ENCODE measurements at regions of chr5 and their contacts with region 1.

Region 1: GRCh38 chr5:140639148-140639979 is at the start of gene TMCO6:
- DNase-seq: peak; percentile 100
- H3K4me3 ChIP-seq: peak within 1 kb of the TSS; percentile 49 to 83 (median 72)
- H3K27ac ChIP-seq: peak within 1 kb of the TSS; percentile 78 to 98 (median 94)
- H3K4me1 ChIP-seq: peaks cover 9 to 63% (median 37%) of the 10 kb centered on the region in 6 donors
- H3K27me3 ChIP-seq: no peaks in the 10 kb centered on the region
- CTCF ChIP-seq: peak; percentile 37 to 94 (median 88)
- POLR2A ChIP-seq: peak in 2 of 3 donors; percentile 42 to 52
- total RNA-seq, gene TMCO6: 18.3 to 55.2 (median 24.5) TPM

Region 2: GRCh38 chr5:140420226-140420570 is 219.2 kb before region 1 on chr5:
- intact Hi-C with region 1: no loop called
- DNase-seq: no peak
- H3K4me3 ChIP-seq: no peak overlapping the region
- H3K27ac ChIP-seq: no peak overlapping the region
- H3K4me1 ChIP-seq: peaks cover 0 to 84% (median 31%) of the 10 kb centered on the region in 6 donors
- H3K27me3 ChIP-seq: no peaks in the 10 kb centered on the region
- CTCF ChIP-seq: no peak
- POLR2A ChIP-seq: no peak

Region 3: GRCh38 chr5:140564196-140565023 is 75.0 kb before region 1 on chr5 and contains the starts of genes APBB3 and SLC35A4:
- intact Hi-C with region 1: loop called (anchors 5 kb)
- DNase-seq: peak; percentile 99
- H3K4me3 ChIP-seq: peak within 1 kb of the TSS; percentile 52 to 92 (median 66)
- H3K27ac ChIP-seq: peak within 1 kb of the TSS; percentile 91 to 99 (median 96)
- H3K4me1 ChIP-seq: peaks cover 25 to 76% (median 58%) of the 10 kb centered on the region in 6 donors
- H3K27me3 ChIP-seq: no peaks in the 10 kb centered on the region
- CTCF ChIP-seq: peak in 5 of 11 experiments; percentile 13 to 41 (median 27)
- POLR2A ChIP-seq: peak; percentile 37 to 80 (median 74)
- total RNA-seq, gene APBB3: 31.9 to 57.8 (median 42.2) TPM
- total RNA-seq, gene SLC35A4: 44.1 to 64.0 (median 58.7) TPM

Measured in spleen (tissue), 13 donors.